Dorsolateral prefrontal cortex (tissue), 120 donors: ENCODE measurements at regions of chr20 and their contacts with region 1.

Region 1: GRCh38 chr20:24657196-24657595 is 187.8 kb downstream of the SYNDIG1 start:
- DNase-seq: peak in 2 of 10 donors; percentile 26
- H3K4me3 ChIP-seq: no peak overlapping the region
- H3K27ac ChIP-seq: peak overlapping the region in 1 of 59 donors; percentile 33
- H3K27me3 ChIP-seq: no peaks in the 10 kb centered on the region
- CTCF ChIP-seq: no peak

Region 2: DNA sequence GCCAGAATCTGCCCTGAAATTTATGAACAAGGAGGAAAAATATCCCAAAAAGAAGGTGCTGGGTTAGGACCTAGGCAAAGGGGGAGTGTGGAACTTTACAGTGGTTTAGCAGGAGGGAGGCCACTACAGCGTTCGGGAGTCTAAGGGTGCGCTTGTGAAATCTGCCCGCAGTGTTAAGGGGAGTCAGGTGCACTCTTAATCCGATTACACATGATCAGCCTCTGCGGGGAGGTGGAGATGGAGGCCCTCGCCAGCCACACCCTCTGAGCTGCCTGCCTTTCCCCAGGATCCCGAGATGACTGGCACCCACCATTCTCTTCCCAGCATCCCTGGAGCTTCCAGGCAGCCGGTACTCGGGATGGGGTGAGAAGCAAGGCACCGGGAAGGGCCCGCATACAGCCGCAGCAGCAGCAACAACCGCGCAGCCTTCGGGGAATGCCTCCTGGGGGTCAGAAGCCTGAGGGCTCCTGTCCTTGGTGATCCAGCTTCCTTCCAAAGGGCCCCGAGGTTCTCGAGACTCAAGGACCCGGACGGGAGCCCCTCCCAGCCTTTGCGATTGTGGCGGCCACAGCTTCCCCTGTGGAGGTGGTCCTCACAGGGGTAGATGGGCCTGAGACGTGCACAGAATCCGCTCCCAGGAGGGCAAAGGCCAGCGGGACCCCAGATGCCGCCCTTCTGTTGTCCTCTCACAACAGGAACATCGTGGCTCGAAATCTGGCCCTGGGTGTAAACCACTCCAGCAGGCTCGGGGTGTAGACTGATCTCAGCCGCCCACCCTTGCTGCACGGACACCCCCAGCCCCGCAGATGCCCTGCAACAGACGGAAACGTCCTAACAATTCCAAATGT is 234.6 kb after region 1 on chr20:
- intact Hi-C with region 1: no loop called
- DNase-seq: no peak
- H3K4me3 ChIP-seq: no peak overlapping the region
- H3K27ac ChIP-seq: no peak overlapping the region
- H3K27me3 ChIP-seq: no peaks in the 10 kb centered on the region
- CTCF ChIP-seq: no peak

Region 3: DNA sequence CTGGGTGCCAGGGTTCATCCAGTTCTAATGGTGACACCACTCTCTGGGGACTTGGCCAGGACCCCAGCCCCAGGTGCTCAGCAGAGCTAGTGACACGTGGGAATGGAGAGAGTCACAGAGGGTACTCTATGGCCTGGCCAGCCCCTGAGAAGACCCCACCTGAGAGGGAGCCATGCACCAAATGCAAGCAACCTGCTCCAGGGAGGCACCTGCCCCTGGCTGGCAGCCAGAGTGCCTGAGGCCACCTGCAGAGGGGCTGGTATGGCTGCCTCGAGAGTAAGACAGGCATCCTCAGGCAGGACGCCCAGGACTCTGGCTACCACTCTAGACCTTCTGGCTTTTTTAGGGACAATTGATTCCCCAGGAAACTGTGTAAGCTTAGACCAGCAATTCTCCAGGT is 253.3 kb after region 1 on chr20:
- intact Hi-C with region 1: loop called in 1 of 2 experiments (anchors 5 kb)
- DNase-seq: peak in 1 of 10 donors; percentile 16
- H3K4me3 ChIP-seq: no peak overlapping the region
- H3K27ac ChIP-seq: no peak overlapping the region
- H3K27me3 ChIP-seq: no peaks in the 10 kb centered on the region
- CTCF ChIP-seq: no peak

Region 4: GRCh38 chr20:25444556-25444955 is 787.4 kb after region 1 on chr20:
- intact Hi-C with region 1: no loop called
- DNase-seq: no peak
- H3K4me3 ChIP-seq: no peak overlapping the region
- H3K27ac ChIP-seq: no peak overlapping the region
- H3K27me3 ChIP-seq: no peaks in the 10 kb centered on the region
- CTCF ChIP-seq: no peak